CD4-positive, alpha-beta T cell (primary cell): ENCODE measurements at regions of chr1 and their contacts with region 1.

Region 1: DNA sequence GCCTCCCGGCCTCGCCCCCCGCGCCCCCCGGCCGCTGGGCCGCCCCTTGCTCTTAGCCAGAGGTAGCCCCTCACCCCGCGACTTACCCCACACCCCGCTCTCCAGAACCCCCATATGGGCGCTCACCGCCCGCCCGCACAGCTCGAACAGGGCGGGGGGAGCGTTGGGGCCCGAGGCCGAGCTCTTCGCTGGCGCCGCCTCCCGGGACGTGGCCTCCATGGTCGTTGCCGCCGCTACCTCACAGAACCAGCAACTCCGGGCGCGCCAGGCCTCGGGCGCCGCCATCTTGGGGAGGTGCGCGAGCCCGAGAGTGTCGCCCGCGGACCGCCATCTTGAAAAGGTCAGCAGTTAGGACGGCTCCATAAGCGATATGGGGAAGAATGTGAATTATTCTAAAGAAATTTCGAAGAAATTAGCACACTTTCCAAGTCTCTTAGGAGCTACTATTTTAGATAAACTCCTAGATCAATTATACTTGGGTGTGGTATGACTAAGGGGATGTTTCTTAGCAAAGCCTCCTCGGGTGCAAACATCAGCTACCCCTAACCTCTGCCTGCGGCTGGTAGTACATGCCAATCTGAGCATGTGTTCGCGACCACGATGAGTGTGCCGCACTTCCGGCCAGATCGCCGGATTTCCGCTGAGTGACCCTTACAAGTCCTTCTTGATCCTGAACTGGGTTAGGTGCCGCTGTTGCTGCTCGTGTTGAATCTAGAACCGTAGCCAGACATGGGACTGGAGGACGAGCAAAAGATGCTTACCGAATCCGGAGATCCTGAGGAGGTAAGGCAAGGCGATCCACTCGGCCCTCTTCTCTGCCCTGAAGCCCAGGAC is at the starts of genes LRRC41 and UQCRH:
- DNase-seq: peak; percentile 89 to 97 (median 92)
- ATAC-seq: peak; percentile 89
- H3K4me3 ChIP-seq: peak within 1 kb of the TSS; percentile 98
- H3K4me3 Mint-ChIP-seq: peak within 1 kb of the TSS; percentile 100
- H3K27ac ChIP-seq: peak within 1 kb of the TSS; percentile 69 to 91
- H3K27ac Mint-ChIP-seq: peak within 1 kb of the TSS; percentile 98
- H3K4me1 ChIP-seq: peaks cover 60% of the 10 kb centered on the region
- H3K4me1 Mint-ChIP-seq: peaks cover 58% of the 10 kb centered on the region
- H3K27me3 ChIP-seq: no peaks in the 10 kb centered on the region
- H3K27me3 Mint-ChIP-seq: no peaks in the 10 kb centered on the region
- CTCF ChIP-seq: no peak
- total RNA-seq, gene LRRC41: 23.0 to 24.3 TPM
- total RNA-seq, gene UQCRH: 101 to 103 TPM

Region 2: DNA sequence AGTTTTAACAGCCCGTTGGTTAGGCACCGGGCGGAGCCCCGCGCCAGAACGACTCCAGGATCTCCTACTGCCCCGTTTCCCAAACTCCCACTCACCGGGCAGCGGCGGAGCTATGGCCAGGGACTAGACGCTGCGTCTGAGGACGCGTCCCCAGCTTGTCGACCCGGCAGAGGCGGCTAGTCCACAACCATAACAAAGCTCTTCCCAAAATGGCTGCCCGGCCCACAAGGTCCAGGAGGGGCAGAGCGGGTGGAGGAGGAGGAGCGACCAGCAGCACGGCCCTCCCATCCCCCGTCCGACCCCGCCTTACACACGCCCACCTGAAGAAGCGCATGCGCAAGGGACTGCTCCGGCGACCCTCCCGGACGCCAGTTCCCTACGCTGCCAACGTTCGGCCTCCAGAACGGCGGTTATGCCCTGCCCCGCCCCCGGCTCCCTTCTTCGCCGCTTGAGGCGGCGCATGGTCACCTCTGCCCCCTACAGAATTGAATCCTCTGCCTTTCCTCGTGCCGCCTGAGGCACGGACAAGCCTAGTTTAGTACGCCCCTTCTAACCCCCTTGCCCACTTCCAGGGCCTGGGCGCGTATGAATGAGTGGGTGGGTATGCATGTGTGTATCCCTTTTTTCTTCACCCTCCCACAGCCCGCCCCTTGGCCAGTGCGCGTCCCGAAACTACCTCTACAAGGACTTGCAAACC is 616.8 kb before region 1 on chr1 and contains the start of gene GPBP1L1:
- CTCF ChIA-PET with region 1: no interaction called
- POLR2A ChIA-PET with region 1: interaction called, 4 read pairs
- intact Hi-C with region 1: loop called in 1 of 2 experiments (anchors 5 kb)
- DNase-seq: peak; percentile 96 to 99 (median 98)
- ATAC-seq: peak; percentile 68
- H3K4me3 ChIP-seq: peak within 1 kb of the TSS; percentile 95
- H3K4me3 Mint-ChIP-seq: peak within 1 kb of the TSS; percentile 99
- H3K27ac ChIP-seq: peak within 1 kb of the TSS; percentile 97
- H3K27ac Mint-ChIP-seq: peak within 1 kb of the TSS; percentile 100
- H3K4me1 ChIP-seq: peaks cover 44% of the 10 kb centered on the region
- H3K4me1 Mint-ChIP-seq: peaks cover 51% of the 10 kb centered on the region
- H3K27me3 ChIP-seq: no peaks in the 10 kb centered on the region
- H3K27me3 Mint-ChIP-seq: no peaks in the 10 kb centered on the region
- CTCF ChIP-seq: no peak
- total RNA-seq, gene GPBP1L1: 116 to 125 TPM

Region 3: DNA sequence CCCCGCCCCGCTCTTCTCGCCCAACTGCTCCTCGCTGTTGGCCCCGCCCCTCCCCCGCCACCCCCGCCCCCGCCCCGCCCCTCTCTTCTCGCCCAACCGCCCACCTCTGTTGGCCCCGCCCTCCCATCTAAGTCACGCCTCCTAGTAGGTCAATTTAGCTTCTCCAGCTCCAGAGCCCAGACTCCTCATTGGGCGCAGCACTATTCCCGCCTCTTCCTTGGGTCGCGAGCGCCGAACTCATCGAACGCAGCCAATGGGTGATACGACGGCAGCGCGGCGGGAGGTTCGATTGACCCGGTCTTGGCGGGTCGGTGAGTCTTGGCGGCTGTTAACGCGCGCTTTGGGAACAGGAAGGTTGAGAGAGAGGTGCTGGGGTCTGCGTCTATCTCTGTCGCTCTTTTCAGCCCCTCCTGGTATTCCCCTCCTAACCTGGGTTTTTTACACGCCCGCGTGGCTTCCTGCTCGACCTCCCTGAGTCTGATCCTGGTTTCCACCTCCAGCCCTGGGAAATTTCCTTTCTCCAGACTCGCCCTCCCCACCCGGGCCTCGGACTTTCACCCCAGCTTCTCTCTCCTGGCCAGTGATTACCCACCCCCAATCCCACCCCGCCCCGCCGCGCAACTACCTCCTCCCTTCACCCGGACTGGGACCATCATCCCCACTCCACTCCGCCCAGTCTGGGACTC is 55.7 kb before region 1 on chr1 and contains the start of gene RAD54L:
- CTCF ChIA-PET with region 1: interaction called, 4 read pairs
- POLR2A ChIA-PET with region 1: interaction called, 42 read pairs
- intact Hi-C with region 1: loop called (anchors 1 to 2 kb)
- DNase-seq: peak; percentile 92 to 99 (median 94)
- ATAC-seq: peak; percentile 96
- H3K4me3 ChIP-seq: peak within 1 kb of the TSS; percentile 83
- H3K4me3 Mint-ChIP-seq: peak within 1 kb of the TSS; percentile 89
- H3K27ac ChIP-seq: no peak within 1 kb of the TSS
- H3K27ac Mint-ChIP-seq: peak within 1 kb of the TSS; percentile 36
- H3K4me1 ChIP-seq: peaks cover 21% of the 10 kb centered on the region
- H3K4me1 Mint-ChIP-seq: peaks cover 26% of the 10 kb centered on the region
- H3K27me3 ChIP-seq: no peaks in the 10 kb centered on the region
- H3K27me3 Mint-ChIP-seq: no peaks in the 10 kb centered on the region
- CTCF ChIP-seq: no peak
- total RNA-seq, gene RAD54L: 0.33 to 1.0 TPM